ENCODE measurements at regions of chr4 and their contacts with region 1.

Region 1: GRCh38 chr4:24584175-24584850 is at the start of gene DHX15:
- DNase-seq: peak; percentile 93
- H3K4me3 Mint-ChIP-seq: peak within 1 kb of the TSS; percentile 90
- H3K27ac Mint-ChIP-seq: peak within 1 kb of the TSS; percentile 85
- H3K4me1 Mint-ChIP-seq: peaks cover 42% of the 10 kb centered on the region
- H3K27me3 Mint-ChIP-seq: no peaks in the 10 kb centered on the region
- total RNA-seq, gene DHX15: 150 TPM

Region 2: DNA sequence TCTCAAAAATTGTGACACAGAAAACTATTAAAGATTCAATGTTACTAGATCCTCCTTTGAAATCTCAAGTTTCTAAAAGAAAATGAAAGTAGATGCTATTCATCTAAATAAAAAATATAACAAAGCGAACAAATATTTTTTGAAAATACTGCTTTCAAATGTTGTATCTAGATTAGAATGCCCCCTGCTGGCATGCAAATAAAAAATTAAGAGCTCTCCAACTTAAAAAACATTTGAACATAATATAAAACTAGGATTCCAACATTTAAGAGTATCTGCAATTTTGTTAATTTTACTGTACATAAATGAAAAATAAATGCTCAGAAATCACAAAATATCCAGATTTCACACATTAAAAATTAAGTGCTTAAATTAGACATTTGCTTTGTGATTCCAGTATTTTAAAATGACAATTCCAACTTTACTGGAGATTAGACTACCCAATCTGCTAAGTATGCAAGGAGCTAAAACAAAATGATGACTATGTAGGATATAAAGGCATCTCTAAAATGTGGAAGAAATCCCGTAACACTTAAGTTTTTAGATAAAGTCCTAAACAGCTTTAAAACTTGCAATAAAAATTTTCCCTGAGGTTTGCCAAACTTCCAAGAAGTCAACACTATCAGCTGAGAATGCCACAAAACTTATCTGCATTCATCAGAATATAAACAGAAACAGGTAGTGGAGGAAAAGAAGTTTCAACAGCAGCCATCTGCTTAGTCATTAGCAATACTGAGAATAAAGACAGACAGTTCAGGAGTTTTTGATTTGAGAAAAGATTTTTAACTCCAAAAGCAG is 32.6 kb before region 1 on chr4:
- CTCF ChIA-PET with region 1: interaction called, 6 read pairs
- POLR2A ChIA-PET with region 1: interaction called, 14 read pairs
- DNase-seq: no peak
- H3K4me3 Mint-ChIP-seq: no peak overlapping the region
- H3K27ac Mint-ChIP-seq: peak overlapping the region; percentile 69
- H3K4me1 Mint-ChIP-seq: peaks cover 43% of the 10 kb centered on the region
- H3K27me3 Mint-ChIP-seq: no peaks in the 10 kb centered on the region

Region 3: GRCh38 chr4:24570574-24571236 is 13.6 kb before region 1 on chr4:
- CTCF ChIA-PET with region 1: interaction called, 4 read pairs
- POLR2A ChIA-PET with region 1: interaction called, 46 read pairs
- DNase-seq: no peak
- H3K4me3 Mint-ChIP-seq: no peak overlapping the region
- H3K27ac Mint-ChIP-seq: peak overlapping the region; percentile 18
- H3K4me1 Mint-ChIP-seq: peaks cover 58% of the 10 kb centered on the region
- H3K27me3 Mint-ChIP-seq: no peaks in the 10 kb centered on the region

Region 4: GRCh38 chr4:24794916-24795665 is 210.8 kb after region 1 on chr4 and contains the start of gene SOD3:
- CTCF ChIA-PET with region 1: no interaction called
- POLR2A ChIA-PET with region 1: no interaction called
- DNase-seq: no peak
- H3K4me3 Mint-ChIP-seq: no peak within 1 kb of the TSS
- H3K27ac Mint-ChIP-seq: no peak within 1 kb of the TSS
- H3K4me1 Mint-ChIP-seq: no peaks in the 10 kb centered on the region
- H3K27me3 Mint-ChIP-seq: peaks cover 12% of the 10 kb centered on the region
- total RNA-seq, gene SOD3: not detected

Region 5: GRCh38 chr4:25159884-25160713 is 575.8 kb after region 1 on chr4 and contains the start of gene SEPSECS:
- CTCF ChIA-PET with region 1: interaction called, 4 read pairs
- POLR2A ChIA-PET with region 1: interaction called, 19 read pairs
- DNase-seq: peak; percentile 95
- H3K4me3 Mint-ChIP-seq: peak within 1 kb of the TSS; percentile 93
- H3K27ac Mint-ChIP-seq: peak within 1 kb of the TSS; percentile 93
- H3K4me1 Mint-ChIP-seq: peaks cover 45% of the 10 kb centered on the region
- H3K27me3 Mint-ChIP-seq: no peaks in the 10 kb centered on the region
- total RNA-seq, gene SEPSECS: 15.1 to 15.2 TPM